ENCODE measurements at regions of chr15 and their contacts with region 1.

Region 1: GRCh38 chr15:90482124-90483011 is 47.4 kb upstream of the CRTC3 start:
- ATAC-seq: peak in 6 of 8 experiments; percentile 28 to 69 (median 56)
- H3K4me3 ChIP-seq: no peak overlapping the region
- H3K27ac ChIP-seq: no peak overlapping the region
- H3K4me1 ChIP-seq: no peaks in the 10 kb centered on the region

Region 2: GRCh38 chr15:90320061-90320884 is 162.1 kb before region 1 on chr15:
- in situ Hi-C with region 1: loop called in 4 of 9 experiments (anchors 10 to 25 kb)
- ATAC-seq: peak; percentile 77 to 97 (median 94)
- H3K4me3 ChIP-seq: no peak overlapping the region
- H3K27ac ChIP-seq: no peak overlapping the region
- H3K4me1 ChIP-seq: peaks cover 7 to 12% of the 10 kb centered on the region in 2 donors

Region 3: DNA sequence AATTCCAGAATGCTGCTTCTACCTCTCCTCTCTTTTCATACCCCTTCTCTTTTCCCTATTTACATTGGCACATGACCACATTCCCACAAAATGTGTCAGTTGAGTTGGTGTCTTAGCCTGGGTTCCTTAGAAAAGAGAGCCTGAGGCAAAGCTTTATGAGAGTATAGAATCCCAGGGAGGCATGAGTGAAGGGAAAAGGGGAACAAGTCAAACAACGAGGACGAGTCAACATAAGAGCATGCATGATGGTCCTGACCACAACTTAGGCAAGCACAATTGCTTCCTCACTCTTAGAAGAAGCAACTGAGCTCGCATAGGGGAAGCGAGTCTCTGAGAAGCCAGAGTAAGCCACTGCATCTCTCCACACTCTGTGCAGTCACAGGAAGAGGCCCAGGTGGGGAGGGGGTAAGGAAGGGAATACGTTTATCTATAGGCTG is 145.6 kb before region 1 on chr15:
- in situ Hi-C with region 1: loop called in 1 of 9 experiments (anchors 25 kb)
- ATAC-seq: peak in 1 of 8 experiments; percentile 33
- H3K4me3 ChIP-seq: no peak overlapping the region
- H3K27ac ChIP-seq: no peak overlapping the region
- H3K4me1 ChIP-seq: peaks cover 0 to 8% of the 10 kb centered on the region in 2 donors